ENCODE measurements at regions of chr14 and their contacts with region 1.

Region 1: GRCh38 chr14:94173885-94174603 is at the start of gene PPP4R4:
- DNase-seq: peak; percentile 87 to 92 (median 88)
- ATAC-seq: peak; percentile 96
- H3K4me3 ChIP-seq: peak within 1 kb of the TSS; percentile 77
- H3K4me3 Mint-ChIP-seq: peak within 1 kb of the TSS; percentile 80 to 94 (median 88)
- H3K27ac ChIP-seq: peak within 1 kb of the TSS; percentile 53
- H3K27ac Mint-ChIP-seq: peak within 1 kb of the TSS; percentile 11 to 86 (median 75)
- H3K4me1 ChIP-seq: peaks cover 0 to 16% of the 10 kb centered on the region in 2 donors
- H3K4me1 Mint-ChIP-seq: peaks cover 15 to 29% (median 22%) of the 10 kb centered on the region in 7 donors
- H3K27me3 ChIP-seq: no peaks in the 10 kb centered on the region
- H3K27me3 Mint-ChIP-seq: peaks cover 0 to 59% (median 5%) of the 10 kb centered on the region in 5 donors
- total RNA-seq, gene PPP4R4: 0.44 to 2.4 (median 1.7) TPM

Region 2: DNA sequence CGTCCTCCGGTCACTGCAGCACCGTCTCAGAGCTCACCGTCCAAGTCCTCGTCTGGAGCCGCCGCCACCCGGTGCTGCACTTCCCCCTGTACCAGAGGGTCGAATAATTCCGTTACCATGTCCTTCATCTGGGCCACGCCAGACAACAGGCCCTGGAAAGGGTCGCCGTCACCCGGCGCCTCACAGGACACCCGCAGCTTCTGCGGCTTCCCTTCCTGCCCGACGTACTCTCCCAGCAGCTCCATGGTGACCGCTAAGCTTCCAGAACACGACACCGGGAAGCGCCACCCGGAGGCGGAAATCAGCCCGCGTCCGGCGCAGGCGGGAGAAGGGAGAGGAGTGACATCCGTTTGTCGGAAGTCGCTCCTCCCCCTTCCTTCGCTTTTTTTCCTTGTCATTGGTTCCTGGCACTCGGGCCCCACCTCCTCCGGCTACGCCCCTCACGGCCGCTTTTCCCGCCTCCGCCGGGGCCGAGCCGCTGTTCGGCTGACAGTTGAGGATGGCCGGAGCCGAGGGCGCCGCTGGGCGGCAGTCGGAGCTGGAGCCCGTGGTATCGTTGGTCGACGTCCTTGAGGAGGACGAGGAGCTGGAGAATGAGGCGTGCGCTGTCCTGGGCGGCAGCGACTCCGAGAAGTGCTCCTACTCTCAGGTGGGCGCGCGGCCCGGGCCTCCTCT is 967.1 kb before region 1 on chr14 and contains the starts of genes GON7 and UBR7:
- CTCF ChIA-PET with region 1: no interaction called
- POLR2A ChIA-PET with region 1: no interaction called
- intact Hi-C with region 1: loop called in 1 of 2 experiments (anchors 5 kb)
- DNase-seq: peak; percentile 66 to 91 (median 83)
- ATAC-seq: peak; percentile 99
- H3K4me3 ChIP-seq: peak within 1 kb of the TSS; percentile 81
- H3K4me3 Mint-ChIP-seq: peak within 1 kb of the TSS; percentile 75 to 99 (median 94)
- H3K27ac ChIP-seq: peak within 1 kb of the TSS; percentile 87
- H3K27ac Mint-ChIP-seq: peak within 1 kb of the TSS; percentile 88 to 97 (median 93)
- H3K4me1 ChIP-seq: peaks cover 13 to 22% of the 10 kb centered on the region in 2 donors
- H3K4me1 Mint-ChIP-seq: peaks cover 22 to 65% (median 50%) of the 10 kb centered on the region in 7 donors
- H3K27me3 ChIP-seq: no peaks in the 10 kb centered on the region
- H3K27me3 Mint-ChIP-seq: no peaks in the 10 kb centered on the region
- total RNA-seq, gene GON7: 3.5 to 17.4 (median 8.3) TPM
- total RNA-seq, gene UBR7: 10.1 to 31.3 (median 13.5) TPM

Region 3: DNA sequence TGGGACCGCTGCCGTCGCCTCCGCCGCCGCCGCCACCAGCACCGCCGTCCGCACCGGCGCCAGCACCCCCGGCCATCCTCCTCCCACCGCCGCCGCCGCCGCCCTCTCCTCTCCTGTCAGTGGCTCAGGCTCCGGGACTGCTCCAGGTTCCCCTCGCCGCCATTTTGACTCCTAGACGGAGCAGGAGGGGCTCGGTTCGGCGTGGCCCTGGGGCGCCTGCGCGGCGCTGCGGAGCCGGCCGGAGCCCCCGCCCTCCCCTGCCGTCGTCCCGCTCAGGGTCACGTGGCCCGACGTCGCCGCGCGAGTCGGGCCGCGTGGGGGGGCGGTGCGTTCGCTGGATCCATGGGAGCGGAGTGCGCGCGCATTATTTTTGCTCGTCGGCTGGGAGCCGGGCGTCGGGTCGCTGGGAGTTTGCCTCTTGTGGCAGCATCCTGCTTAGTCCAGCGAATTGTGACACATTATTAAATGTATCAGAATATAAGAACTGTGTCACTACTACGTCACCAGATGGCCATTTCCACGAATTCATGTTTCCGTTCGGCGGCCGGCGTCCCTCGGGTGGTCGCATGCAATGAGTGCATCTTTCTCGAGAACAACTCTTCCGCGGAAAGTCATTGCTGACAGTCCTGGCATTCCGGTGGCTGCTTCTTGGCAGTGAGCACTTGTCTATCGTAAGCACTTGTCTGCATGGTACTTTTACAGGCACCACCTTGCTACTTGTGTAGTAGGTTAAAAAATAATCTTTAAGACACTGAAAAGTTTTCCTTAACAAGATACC is 841.0 kb before region 1 on chr14 and contains the start of gene BTBD7:
- CTCF ChIA-PET with region 1: no interaction called
- POLR2A ChIA-PET with region 1: no interaction called
- intact Hi-C with region 1: loop called in 1 of 2 experiments (anchors 2 kb)
- DNase-seq: peak; percentile 91 to 95 (median 93)
- ATAC-seq: peak; percentile 96
- H3K4me3 ChIP-seq: peak within 1 kb of the TSS; percentile 86
- H3K4me3 Mint-ChIP-seq: peak within 1 kb of the TSS; percentile 90 to 96 (median 92)
- H3K27ac ChIP-seq: peak within 1 kb of the TSS; percentile 90
- H3K27ac Mint-ChIP-seq: peak within 1 kb of the TSS; percentile 87 to 98 (median 93)
- H3K4me1 ChIP-seq: peaks cover 19 to 21% of the 10 kb centered on the region in 2 donors
- H3K4me1 Mint-ChIP-seq: peaks cover 34 to 64% (median 54%) of the 10 kb centered on the region in 7 donors
- H3K27me3 ChIP-seq: no peaks in the 10 kb centered on the region
- H3K27me3 Mint-ChIP-seq: no peaks in the 10 kb centered on the region
- total RNA-seq, gene BTBD7: 18.5 to 31.7 (median 27.5) TPM

Region 4: GRCh38 chr14:93959239-93960107 is 214.6 kb before region 1 on chr14:
- CTCF ChIA-PET with region 1: no interaction called
- POLR2A ChIA-PET with region 1: interaction called, 3 read pairs
- intact Hi-C with region 1: loop called (anchors 5 kb)
- DNase-seq: peak; percentile 59 to 93 (median 76)
- ATAC-seq: peak; percentile 87
- H3K4me3 ChIP-seq: peak overlapping the region; percentile 23
- H3K4me3 Mint-ChIP-seq: peak overlapping the region; percentile 57 to 87 (median 72)
- H3K27ac ChIP-seq: no peak overlapping the region
- H3K27ac Mint-ChIP-seq: peak overlapping the region; percentile 49 to 100 (median 85)
- H3K4me1 ChIP-seq: peaks cover 74 to 99% of the 10 kb centered on the region in 2 donors
- H3K4me1 Mint-ChIP-seq: peaks cover 63 to 96% (median 87%) of the 10 kb centered on the region in 7 donors
- H3K27me3 ChIP-seq: no peaks in the 10 kb centered on the region
- H3K27me3 Mint-ChIP-seq: no peaks in the 10 kb centered on the region

Region 5: GRCh38 chr14:93975791-93976476 is 198.1 kb before region 1 on chr14:
- CTCF ChIA-PET with region 1: no interaction called
- POLR2A ChIA-PET with region 1: no interaction called
- intact Hi-C with region 1: loop called in 1 of 2 experiments (anchors 1 kb)
- DNase-seq: no peak
- ATAC-seq: no peak
- H3K4me3 ChIP-seq: peak overlapping the region; percentile 9
- H3K4me3 Mint-ChIP-seq: peak overlapping the region in 9 of 10 donors; percentile 18 to 92 (median 59)
- H3K27ac ChIP-seq: no peak overlapping the region
- H3K27ac Mint-ChIP-seq: peak overlapping the region in 3 of 9 donors; percentile 12 to 97 (median 28)
- H3K4me1 ChIP-seq: peaks cover 41 to 46% of the 10 kb centered on the region in 2 donors
- H3K4me1 Mint-ChIP-seq: peaks cover 39 to 94% (median 62%) of the 10 kb centered on the region in 7 donors
- H3K27me3 ChIP-seq: no peaks in the 10 kb centered on the region
- H3K27me3 Mint-ChIP-seq: peaks cover 0 to 6% (median 6%) of the 10 kb centered on the region in 5 donors

Region 6: GRCh38 chr14:94026173-94026888 is 147.7 kb before region 1 on chr14 and contains the start of gene OTUB2:
- CTCF ChIA-PET with region 1: no interaction called
- POLR2A ChIA-PET with region 1: no interaction called
- intact Hi-C with region 1: loop called in 1 of 2 experiments (anchors 1 kb)
- DNase-seq: peak; percentile 89 to 98 (median 96)
- ATAC-seq: peak; percentile 100
- H3K4me3 ChIP-seq: peak within 1 kb of the TSS; percentile 51
- H3K4me3 Mint-ChIP-seq: peak within 1 kb of the TSS; percentile 72 to 90 (median 82)
- H3K27ac ChIP-seq: no peak within 1 kb of the TSS
- H3K27ac Mint-ChIP-seq: peak within 1 kb of the TSS in 7 of 9 donors; percentile 20 to 75 (median 66)
- H3K4me1 ChIP-seq: peaks cover 5 to 12% of the 10 kb centered on the region in 2 donors
- H3K4me1 Mint-ChIP-seq: peaks cover 14 to 43% (median 18%) of the 10 kb centered on the region in 7 donors
- H3K27me3 ChIP-seq: no peaks in the 10 kb centered on the region
- H3K27me3 Mint-ChIP-seq: peaks cover 0 to 2% (median 0%) of the 10 kb centered on the region in 5 donors
- total RNA-seq, gene OTUB2: 0.11 to 2.5 (median 0.63) TPM in 4 of 5 experiments, not detected in the other

Region 7: GRCh38 chr14:94161981-94162380 is 12.1 kb before region 1 on chr14:
- CTCF ChIA-PET with region 1: interaction called, 4 read pairs
- POLR2A ChIA-PET with region 1: interaction called, 13 read pairs
- intact Hi-C with region 1: loop called in 1 of 2 experiments (anchors 1 kb)
- DNase-seq: no peak
- ATAC-seq: no peak
- H3K4me3 ChIP-seq: no peak overlapping the region
- H3K4me3 Mint-ChIP-seq: peak overlapping the region in 5 of 10 donors; percentile 2 to 50 (median 12)
- H3K27ac ChIP-seq: no peak overlapping the region
- H3K27ac Mint-ChIP-seq: peak overlapping the region in 8 of 9 donors; percentile 30 to 75 (median 67)
- H3K4me1 ChIP-seq: peaks cover 12 to 47% of the 10 kb centered on the region in 2 donors
- H3K4me1 Mint-ChIP-seq: peaks cover 24 to 74% (median 62%) of the 10 kb centered on the region in 7 donors
- H3K27me3 ChIP-seq: no peaks in the 10 kb centered on the region
- H3K27me3 Mint-ChIP-seq: peaks cover 0 to 3% (median 0%) of the 10 kb centered on the region in 5 donors